ENCODE measurements at regions of chr4 and their contacts with region 1.

Region 1: GRCh38 chr4:92387459-92388069 is 83.8 kb downstream of the GRID2 start:
- DNase-seq: no peak
- H3K4me3 ChIP-seq: no peak overlapping the region
- H3K27ac ChIP-seq: no peak overlapping the region
- H3K4me1 ChIP-seq: no peaks in the 10 kb centered on the region
- H3K27me3 ChIP-seq: no peaks in the 10 kb centered on the region
- CTCF ChIP-seq: peak in 3 of 4 experiments; percentile 7 to 44 (median 25)
- EP300 ChIP-seq: no peak
- POLR2A ChIP-seq: no peak

Region 2: GRCh38 chr4:90419124-90419711 is 1968.3 kb before region 1 on chr4:
- intact Hi-C with region 1: loop called (anchors 5 kb)
- DNase-seq: no peak
- H3K4me3 ChIP-seq: no peak overlapping the region
- H3K27ac ChIP-seq: no peak overlapping the region
- H3K4me1 ChIP-seq: no peaks in the 10 kb centered on the region
- H3K27me3 ChIP-seq: no peaks in the 10 kb centered on the region
- CTCF ChIP-seq: peak in 1 of 4 experiments; percentile 31
- EP300 ChIP-seq: no peak
- POLR2A ChIP-seq: no peak

Region 3: GRCh38 chr4:92172203-92172602 is 215.4 kb before region 1 on chr4:
- intact Hi-C with region 1: no loop called
- DNase-seq: no peak
- H3K4me3 ChIP-seq: no peak overlapping the region
- H3K27ac ChIP-seq: no peak overlapping the region
- H3K4me1 ChIP-seq: no peaks in the 10 kb centered on the region
- H3K27me3 ChIP-seq: no peaks in the 10 kb centered on the region
- CTCF ChIP-seq: no peak
- EP300 ChIP-seq: no peak
- POLR2A ChIP-seq: no peak